H1 (cell line): ENCODE measurements at regions of chr1 and their contacts with region 1.

Region 1: DNA sequence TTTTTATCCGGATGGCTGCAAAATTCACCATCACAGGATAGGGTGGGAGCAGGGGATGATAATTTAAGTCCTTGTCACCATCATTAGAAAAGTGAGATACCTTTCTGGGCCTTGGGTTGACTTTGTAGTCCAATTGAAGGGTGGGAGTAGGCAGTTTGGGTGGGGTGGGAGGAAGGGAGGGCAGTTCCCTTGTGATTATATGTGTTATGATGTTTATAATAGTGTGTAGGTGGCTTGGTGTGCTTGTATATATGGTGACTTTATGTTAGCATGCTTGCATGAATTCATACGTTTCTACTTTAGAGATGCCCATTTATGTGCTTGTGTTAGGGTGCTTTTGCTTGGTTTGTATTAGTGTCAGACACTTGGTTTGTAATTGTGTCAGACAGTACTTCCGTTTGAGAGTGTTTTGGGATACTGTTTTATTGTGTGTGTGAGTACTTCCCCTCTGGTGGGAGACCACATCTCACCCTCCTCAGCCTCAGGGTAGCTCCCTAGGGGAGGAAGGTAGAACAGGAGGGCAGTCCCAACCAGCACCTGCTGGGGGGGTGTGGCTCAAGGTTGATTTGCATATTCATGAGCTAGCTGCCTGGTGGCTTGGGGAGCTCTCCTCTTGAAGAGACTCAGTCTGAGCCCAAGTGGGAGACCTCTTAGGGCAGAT is 6.3 kb upstream of the POU3F1 start:
- DNase-seq: peak in 1 of 2 experiments; percentile 68
- H3K4me3 ChIP-seq: no peak overlapping the region
- H3K27ac ChIP-seq: no peak overlapping the region
- H3K4me1 ChIP-seq: peaks cover 2 to 14% (median 8%) of the 10 kb centered on the region in 4 experiments
- H3K27me3 ChIP-seq: peaks cover 0 to 12% (median 8%) of the 10 kb centered on the region in 4 experiments; a peak in 5 of 7 replicates
- CTCF ChIP-seq: no peak
- EP300 ChIP-seq: no peak
- POLR2A ChIP-seq: no peak
- RAD21 ChIP-seq: no peak

Region 2: GRCh38 chr1:38037221-38037939 is 15.5 kb before region 1 on chr1:
- CTCF ChIA-PET with region 1: interaction called, 24 read pairs
- POLR2A ChIA-PET with region 1: interaction called, 5 read pairs
- DNase-seq: no peak
- H3K4me3 ChIP-seq: no peak overlapping the region
- H3K27ac ChIP-seq: no peak overlapping the region
- H3K4me1 ChIP-seq: no peaks in the 10 kb centered on the region; a peak in 2 of 7 replicates
- H3K27me3 ChIP-seq: no peaks in the 10 kb centered on the region
- CTCF ChIP-seq: no peak
- EP300 ChIP-seq: no peak
- POLR2A ChIP-seq: no peak
- RAD21 ChIP-seq: peak in 1 of 2 experiments; percentile 37; a peak in 2 of 4 replicates

Region 3: DNA sequence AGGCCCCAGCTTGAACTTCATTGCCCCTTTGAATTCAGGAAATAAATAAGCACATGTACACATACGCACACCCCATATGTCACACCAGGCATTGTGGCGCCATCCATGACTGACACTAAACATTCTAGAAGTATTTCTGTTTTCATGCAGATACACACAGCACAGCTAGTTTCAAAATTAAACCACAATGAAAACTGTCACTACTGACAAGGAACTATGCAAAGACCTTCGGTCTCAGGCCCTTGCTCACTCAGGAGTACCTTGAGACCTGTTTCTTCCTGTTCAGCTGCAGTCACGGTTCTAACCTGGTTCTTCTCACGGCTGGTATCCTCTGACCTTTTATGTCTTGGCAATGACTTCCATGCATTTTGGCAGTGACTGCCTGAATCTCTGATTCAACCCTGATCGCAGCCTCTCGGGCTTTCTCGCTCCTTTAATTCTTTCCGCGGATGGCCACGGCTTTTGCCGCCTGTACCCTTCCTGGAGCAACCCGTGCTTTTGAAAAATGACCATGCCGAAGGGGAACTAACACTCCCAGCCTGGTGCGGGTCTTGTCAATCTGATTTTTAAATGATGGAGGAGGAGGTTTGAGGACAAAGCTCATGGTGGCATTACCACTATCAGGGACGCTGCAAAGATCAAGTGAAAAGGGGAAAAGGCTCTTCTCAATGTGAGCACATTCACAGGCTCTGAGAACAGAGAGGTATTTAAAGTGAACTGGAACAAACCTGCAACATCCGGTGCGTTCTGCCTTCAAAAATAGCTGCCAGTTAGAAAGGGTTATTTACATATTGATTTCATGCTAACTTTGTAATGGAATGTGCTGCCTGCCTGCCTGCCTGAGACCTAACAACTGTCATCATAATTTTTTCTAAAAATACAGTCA is 422.1 kb after region 1 on chr1:
- CTCF ChIA-PET with region 1: no interaction called
- POLR2A ChIA-PET with region 1: no interaction called
- DNase-seq: no peak
- H3K4me3 ChIP-seq: peak overlapping the region in 1 of 4 experiments; percentile 61; a peak in 4 of 8 replicates
- H3K27ac ChIP-seq: no peak overlapping the region
- H3K4me1 ChIP-seq: peaks cover 6 to 16% (median 12%) of the 10 kb centered on the region in 4 experiments; a peak in 6 of 7 replicates
- H3K27me3 ChIP-seq: peaks cover 0 to 7% (median 0%) of the 10 kb centered on the region in 4 experiments; a peak in 3 of 7 replicates
- CTCF ChIP-seq: no peak
- EP300 ChIP-seq: no peak
- POLR2A ChIP-seq: peak in 1 of 2 experiments; percentile 21; a peak in 1 of 3 replicates
- RAD21 ChIP-seq: no peak